ENCODE measurements at regions of chr5 and their contacts with region 1.

Region 1: DNA sequence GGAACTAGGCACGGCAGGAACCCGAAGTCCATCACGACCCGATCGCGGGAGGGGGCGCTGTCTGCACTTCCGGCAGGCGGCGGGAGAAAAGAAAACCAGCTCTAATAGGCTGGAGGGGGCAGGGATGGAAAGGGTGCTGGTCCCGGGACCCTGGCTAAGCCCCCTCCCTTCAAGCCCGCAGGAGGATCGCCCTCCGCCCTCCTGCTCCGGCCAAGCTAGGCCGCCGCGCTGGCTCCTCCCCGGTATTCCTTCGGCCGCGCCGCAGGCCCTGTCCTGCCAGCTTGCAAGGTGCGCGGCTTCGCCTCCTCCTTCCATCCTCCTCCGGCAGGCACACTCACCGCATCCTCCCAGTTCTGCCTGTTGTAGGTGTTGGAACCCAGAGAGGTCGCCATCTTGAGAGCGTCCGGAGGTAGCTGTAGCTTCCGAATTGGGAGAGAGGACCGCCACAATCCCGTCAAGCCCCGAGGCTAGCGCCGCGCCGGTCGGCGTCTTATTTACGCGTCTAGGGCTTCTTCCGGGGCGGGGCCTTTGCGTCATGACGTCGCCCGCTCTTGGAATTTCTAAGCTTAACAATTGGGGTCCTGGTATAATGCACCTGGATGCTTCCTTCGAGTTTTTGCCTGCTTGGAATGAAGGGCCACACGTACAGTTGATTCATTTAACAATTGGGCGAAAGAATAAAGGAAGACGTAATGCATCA is at the start of gene RBM22:
- DNase-seq: peak; percentile 77
- ATAC-seq: peak; percentile 97
- H3K4me3 ChIP-seq: peak within 1 kb of the TSS; percentile 97 to 100 (median 99)
- H3K27ac ChIP-seq: peak within 1 kb of the TSS; percentile 84
- H3K4me1 ChIP-seq: peaks cover 21% of the 10 kb centered on the region
- H3K27me3 ChIP-seq: no peaks in the 10 kb centered on the region; a peak in 1 of 5 replicates
- CTCF ChIP-seq: peak; percentile 72
- EP300 ChIP-seq: 0 out of 4 replicates have a peak, but pooled peaks of 1 of the 2 experiments have one; percentile 19
- POLR2A ChIP-seq: peak; percentile 73 to 85
- RAD21 ChIP-seq: peak; percentile 7; the same call in 1 of the 2 replicates
- total RNA-seq, gene RBM22: 27.7 and 28.3 TPM in 2 replicates

Region 2: GRCh38 chr5:150778517-150779396 is 78.0 kb after region 1 on chr5 and contains the start of gene SMIM3:
- CTCF ChIA-PET with region 1: no interaction called
- POLR2A ChIA-PET with region 1: interaction called, 14 read pairs
- in situ Hi-C with region 1: no loop called
- intact Hi-C with region 1: loop called (anchors 1 kb)
- DNase-seq: peak; percentile 47
- ATAC-seq: peak; percentile 87
- H3K4me3 ChIP-seq: peak within 1 kb of the TSS; percentile 74 to 90 (median 79)
- H3K27ac ChIP-seq: peak within 1 kb of the TSS; percentile 51
- H3K4me1 ChIP-seq: peaks cover 59% of the 10 kb centered on the region
- H3K27me3 ChIP-seq: no peaks in the 10 kb centered on the region; a peak in 1 of 5 replicates
- CTCF ChIP-seq: peak; percentile 84
- EP300 ChIP-seq: no peak
- POLR2A ChIP-seq: peak in 1 of 2 experiments; percentile 77; a peak in 2 of 4 replicates
- RAD21 ChIP-seq: peak; percentile 53
- total RNA-seq, gene SMIM3: 11.6 and 14.1 TPM in 2 replicates